Caco-2 (cell line): ENCODE measurements at regions of chr3 and their contacts with region 1.

Region 1: DNA sequence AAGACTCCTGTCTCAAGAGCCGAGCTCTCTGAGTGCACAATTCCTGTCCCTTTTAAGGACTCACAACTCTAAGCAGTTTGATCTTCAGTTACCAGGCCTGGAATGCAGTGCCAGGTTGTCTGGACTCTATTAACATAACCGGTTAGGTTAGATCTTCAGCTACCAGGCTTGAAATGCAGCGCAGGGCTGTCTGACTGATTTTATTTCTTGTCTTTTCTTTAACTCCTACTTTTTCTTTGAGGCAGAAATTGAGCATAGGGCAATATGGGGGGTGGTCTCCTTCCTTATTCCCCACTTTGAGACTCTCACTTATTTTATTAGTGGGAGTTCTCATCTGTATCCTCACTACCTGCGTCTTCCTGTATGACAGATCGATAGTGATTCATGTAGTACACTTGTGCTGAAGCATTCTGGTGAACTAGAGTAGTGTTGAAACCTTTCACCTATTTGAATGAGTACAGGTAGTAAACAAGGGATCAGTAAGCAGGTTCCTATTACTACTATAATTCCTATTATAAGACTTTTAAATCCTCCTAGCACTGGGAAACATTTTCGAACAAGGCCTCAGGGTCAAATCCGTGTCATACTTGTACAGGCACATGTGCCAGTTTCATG is 324.9 kb downstream of the CGGBP1 start:
- DNase-seq: peak; percentile 36 to 39
- H3K4me3 ChIP-seq: no peak overlapping the region
- H3K4me3 Mint-ChIP-seq: no peak overlapping the region
- H3K27ac Mint-ChIP-seq: peak overlapping the region; percentile 74
- H3K4me1 ChIP-seq: peaks cover 8% of the 10 kb centered on the region; the same call in 1 of the 2 replicates
- H3K4me1 Mint-ChIP-seq: peaks cover 6% of the 10 kb centered on the region
- H3K27me3 ChIP-seq: no peaks in the 10 kb centered on the region
- H3K27me3 Mint-ChIP-seq: no peaks in the 10 kb centered on the region
- CTCF ChIP-seq: no peak

Region 2: DNA sequence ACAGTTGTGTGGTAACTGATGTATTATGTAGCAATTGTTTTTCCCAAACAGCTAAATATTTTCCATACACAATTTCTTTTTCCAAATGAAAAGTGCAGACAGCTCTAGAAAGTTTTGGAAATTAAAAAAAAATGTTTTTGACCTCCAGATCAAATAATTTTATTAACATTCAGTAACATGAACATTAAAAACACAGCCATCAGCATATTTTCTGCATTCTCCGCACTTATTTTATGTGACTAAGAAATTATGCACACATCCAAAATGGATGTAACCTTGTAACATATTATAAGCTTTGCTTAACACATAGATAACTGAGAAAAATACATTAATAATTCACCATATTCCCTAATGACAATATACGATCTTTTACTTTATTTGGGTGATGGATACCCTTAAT is 967.5 kb before region 1 on chr3:
- CTCF ChIA-PET with region 1: no interaction called
- POLR2A ChIA-PET with region 1: no interaction called
- intact Hi-C with region 1: loop called (anchors 5 kb)
- DNase-seq: no peak
- H3K4me3 ChIP-seq: no peak overlapping the region
- H3K4me3 Mint-ChIP-seq: no peak overlapping the region
- H3K27ac Mint-ChIP-seq: no peak overlapping the region
- H3K4me1 ChIP-seq: no peaks in the 10 kb centered on the region
- H3K4me1 Mint-ChIP-seq: no peaks in the 10 kb centered on the region
- H3K27me3 ChIP-seq: no peaks in the 10 kb centered on the region
- H3K27me3 Mint-ChIP-seq: no peaks in the 10 kb centered on the region
- CTCF ChIP-seq: no peak